ENCODE measurements at regions of chr5 and their contacts with region 1.

Region 1: DNA sequence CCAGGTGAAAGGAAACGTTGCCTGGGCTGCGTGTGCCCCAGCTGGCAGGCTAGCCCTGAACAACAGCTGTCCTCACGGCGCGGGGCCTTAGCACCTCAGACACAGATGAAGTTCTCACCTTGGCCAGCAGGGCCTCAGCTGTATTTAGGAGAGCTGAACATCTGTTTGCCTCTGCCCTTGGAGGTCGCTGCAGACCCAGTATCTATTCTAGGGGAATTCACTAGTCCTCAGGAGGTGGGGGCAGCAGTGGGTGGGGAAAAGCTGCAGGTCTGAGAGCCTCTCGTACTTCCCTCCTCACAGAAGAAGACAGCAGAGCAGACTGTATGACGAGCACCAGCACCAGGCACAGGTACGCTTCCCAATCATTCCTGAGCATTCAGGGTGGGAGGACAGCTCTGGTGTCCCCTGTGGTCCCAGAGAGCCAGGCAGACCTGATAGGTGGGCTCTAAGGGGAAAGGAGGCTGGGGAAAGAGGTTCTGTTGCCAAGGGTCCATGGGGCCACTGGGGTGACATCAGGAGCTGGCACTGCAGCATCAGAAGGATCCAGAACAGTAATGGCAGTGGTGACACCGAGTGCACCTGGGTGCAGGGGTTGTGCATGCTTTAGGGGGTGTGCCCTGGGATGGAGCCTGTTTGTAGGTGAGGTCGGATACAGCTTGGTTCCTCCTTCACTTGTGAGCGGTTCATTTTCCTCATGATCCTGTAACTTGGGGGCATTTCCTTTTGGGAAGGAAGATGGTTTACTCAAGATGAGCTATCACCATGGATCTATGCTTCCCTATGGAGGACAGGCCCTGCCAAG is 13.8 kb downstream of the CD74 start:
- DNase-seq: no peak
- ATAC-seq: peak; percentile 52
- H3K4me3 Mint-ChIP-seq: no peak overlapping the region
- H3K27ac Mint-ChIP-seq: no peak overlapping the region
- H3K4me1 Mint-ChIP-seq: no peaks in the 10 kb centered on the region
- H3K27me3 Mint-ChIP-seq: no peaks in the 10 kb centered on the region

Region 2: DNA sequence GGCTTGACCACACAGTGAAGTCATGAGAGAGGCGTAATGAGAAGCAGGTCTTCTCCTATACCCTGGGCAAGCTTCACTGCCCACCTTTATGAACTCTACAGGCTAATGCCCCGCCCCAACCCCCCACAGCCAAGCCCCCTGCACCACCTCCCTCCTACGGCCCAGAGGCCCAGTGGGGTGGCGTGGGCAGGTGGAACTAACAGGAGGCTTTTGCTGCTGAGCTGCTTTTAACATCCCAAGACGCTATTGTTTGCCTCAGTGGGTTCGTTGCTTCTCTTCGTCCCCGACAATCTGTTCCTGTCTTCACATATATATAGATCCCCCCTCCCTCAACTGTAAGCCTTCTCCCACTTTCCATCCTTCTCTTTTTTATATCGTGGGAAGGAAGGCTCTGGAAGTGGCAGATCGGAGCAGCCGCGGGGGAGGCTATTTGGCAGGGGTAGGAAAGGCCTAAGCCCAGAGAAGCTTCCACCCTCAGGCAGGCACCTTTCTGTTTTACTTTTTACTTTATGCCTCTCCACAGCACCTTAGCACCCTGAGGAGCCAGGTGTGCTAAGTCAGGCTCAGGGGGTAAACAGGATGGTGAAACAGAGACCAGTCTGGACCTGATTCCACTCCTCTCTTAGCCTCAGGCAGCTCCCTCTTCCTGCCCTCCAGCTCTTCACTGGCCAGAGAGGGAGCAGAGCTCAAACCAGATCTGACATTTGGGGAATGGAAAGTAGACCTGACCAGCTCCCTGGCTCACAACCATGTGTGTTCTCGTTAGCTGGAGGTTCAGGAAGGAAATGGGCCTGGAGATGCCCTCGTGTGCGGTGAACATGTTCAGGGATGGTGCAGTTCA is 12.7 kb before region 1 on chr5:
- CTCF ChIA-PET with region 1: interaction called, 11 read pairs
- POLR2A ChIA-PET with region 1: interaction called, 6 read pairs
- DNase-seq: no peak
- ATAC-seq: no peak
- H3K4me3 Mint-ChIP-seq: no peak overlapping the region
- H3K27ac Mint-ChIP-seq: no peak overlapping the region
- H3K4me1 Mint-ChIP-seq: no peaks in the 10 kb centered on the region
- H3K27me3 Mint-ChIP-seq: no peaks in the 10 kb centered on the region

Region 3: GRCh38 chr5:150409638-150410523 is 11.0 kb after region 1 on chr5:
- CTCF ChIA-PET with region 1: interaction called, 34 read pairs
- POLR2A ChIA-PET with region 1: interaction called, 70 read pairs
- DNase-seq: peak; percentile 65
- ATAC-seq: no peak
- H3K4me3 Mint-ChIP-seq: peak overlapping the region; percentile 98
- H3K27ac Mint-ChIP-seq: peak overlapping the region; percentile 100
- H3K4me1 Mint-ChIP-seq: peaks cover 45% of the 10 kb centered on the region
- H3K27me3 Mint-ChIP-seq: no peaks in the 10 kb centered on the region

Region 4: DNA sequence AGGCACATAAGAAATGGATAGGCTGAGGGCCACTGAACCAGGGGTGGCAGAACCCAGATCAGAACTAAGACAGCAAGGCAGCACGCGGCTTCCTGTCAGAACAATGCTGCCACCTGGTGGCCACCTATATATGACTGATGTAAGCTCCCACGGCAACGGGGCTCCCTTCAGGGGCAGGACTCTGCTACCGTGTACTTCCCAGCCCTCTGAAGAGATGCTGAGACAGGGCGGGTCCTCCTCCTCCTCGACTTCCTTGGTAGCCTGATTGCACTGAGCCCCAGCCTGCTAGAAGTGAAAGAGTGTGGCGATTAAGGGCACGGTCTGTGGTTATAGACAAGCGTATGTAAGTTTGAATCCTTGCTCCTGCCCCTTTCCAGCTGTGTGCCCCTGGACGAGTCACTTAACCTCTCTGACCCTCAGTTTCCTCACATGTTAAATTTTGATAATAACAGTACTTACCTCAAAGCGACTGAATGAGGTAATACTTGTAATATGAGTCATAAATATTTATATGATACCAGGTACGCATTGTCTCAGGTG is 37.3 kb after region 1 on chr5:
- CTCF ChIA-PET with region 1: interaction called, 42 read pairs
- POLR2A ChIA-PET with region 1: interaction called, 3 read pairs
- DNase-seq: peak; percentile 95
- ATAC-seq: peak; percentile 99
- H3K4me3 Mint-ChIP-seq: peak overlapping the region; percentile 41
- H3K27ac Mint-ChIP-seq: peak overlapping the region; percentile 82
- H3K4me1 Mint-ChIP-seq: peaks cover 11% of the 10 kb centered on the region
- H3K27me3 Mint-ChIP-seq: peaks cover 2% of the 10 kb centered on the region

Region 5: GRCh38 chr5:150449517-150450339 is 50.8 kb after region 1 on chr5 and contains the start of gene RPS14:
- CTCF ChIA-PET with region 1: interaction called, 10 read pairs
- POLR2A ChIA-PET with region 1: interaction called, 5 read pairs
- DNase-seq: peak; percentile 97
- ATAC-seq: peak; percentile 90
- H3K4me3 Mint-ChIP-seq: peak within 1 kb of the TSS; percentile 91
- H3K27ac Mint-ChIP-seq: peak within 1 kb of the TSS; percentile 99
- H3K4me1 Mint-ChIP-seq: peaks cover 35% of the 10 kb centered on the region
- H3K27me3 Mint-ChIP-seq: no peaks in the 10 kb centered on the region
- total RNA-seq, gene RPS14: 2,046 to 2,123 TPM

Measured in activated CD8-positive, alpha-beta T cell treated with anti-CD3 and anti-CD28 coated beads, Interleukin-2, amount 10 ng/mL, durations not matched to agents 7 days and 5 days (primary cell).